ENCODE measurements at regions of chr17 and their contacts with region 1.

Region 1: GRCh38 chr17:4789901-4790704 is 1.3 kb downstream of the GLTPD2 start:
- DNase-seq: peak; percentile 54 to 94 (median 77)
- ATAC-seq: peak; percentile 77
- H3K4me3 ChIP-seq: peak overlapping the region; percentile 56 to 60
- H3K4me3 Mint-ChIP-seq: peak overlapping the region; percentile 89
- H3K27ac ChIP-seq: peak overlapping the region; percentile 63 to 68
- H3K27ac Mint-ChIP-seq: peak overlapping the region; percentile 96
- H3K4me1 ChIP-seq: peaks cover 29% of the 10 kb centered on the region
- H3K4me1 Mint-ChIP-seq: peaks cover 27% of the 10 kb centered on the region
- H3K27me3 ChIP-seq: peaks cover 15 to 20% of the 10 kb centered on the region in 2 experiments
- H3K27me3 Mint-ChIP-seq: peaks cover 26% of the 10 kb centered on the region
- CTCF ChIP-seq: peak; percentile 80

Region 2: GRCh38 chr17:4703330-4703691 is 86.8 kb before region 1 on chr17:
- CTCF ChIA-PET with region 1: interaction called, 45 read pairs
- POLR2A ChIA-PET with region 1: interaction called, 30 read pairs
- intact Hi-C with region 1: no loop called
- DNase-seq: no peak
- ATAC-seq: peak; percentile 11
- H3K4me3 ChIP-seq: peak overlapping the region; percentile 83 to 96
- H3K4me3 Mint-ChIP-seq: peak overlapping the region; percentile 92
- H3K27ac ChIP-seq: peak overlapping the region; percentile 86 to 96
- H3K27ac Mint-ChIP-seq: peak overlapping the region; percentile 91
- H3K4me1 ChIP-seq: peaks cover 26% of the 10 kb centered on the region
- H3K4me1 Mint-ChIP-seq: peaks cover 39% of the 10 kb centered on the region
- H3K27me3 ChIP-seq: no peaks in the 10 kb centered on the region
- H3K27me3 Mint-ChIP-seq: no peaks in the 10 kb centered on the region
- CTCF ChIP-seq: no peak

Region 3: DNA sequence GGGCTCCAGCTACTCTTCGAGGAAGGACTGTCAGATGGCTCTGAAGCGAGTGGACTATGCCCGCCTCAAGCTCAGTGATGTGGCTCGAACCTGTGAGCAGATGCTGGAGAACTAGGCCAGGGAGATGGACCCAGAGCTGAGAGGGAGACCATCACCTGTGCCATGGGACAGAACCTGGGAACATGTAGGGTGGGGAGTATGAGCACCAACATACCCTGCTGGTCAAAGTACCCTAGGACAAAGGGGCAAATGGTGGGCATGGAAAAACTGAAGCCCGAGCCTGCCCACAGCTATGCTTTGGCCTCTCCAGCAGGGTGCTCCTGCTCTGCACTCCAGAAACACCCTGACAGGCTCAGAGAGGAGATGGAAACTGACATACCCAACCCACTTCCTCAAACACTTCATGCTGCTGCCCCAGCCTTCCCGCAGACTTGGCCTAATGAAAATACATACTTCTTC is 57.0 kb before region 1 on chr17:
- CTCF ChIA-PET with region 1: interaction called, 10 read pairs
- POLR2A ChIA-PET with region 1: interaction called, 7 read pairs
- intact Hi-C with region 1: loop called (anchors 1 kb)
- DNase-seq: peak in 1 of 9 experiments; percentile 45
- ATAC-seq: no peak
- H3K4me3 ChIP-seq: no peak overlapping the region
- H3K4me3 Mint-ChIP-seq: peak overlapping the region; percentile 39
- H3K27ac ChIP-seq: no peak overlapping the region
- H3K27ac Mint-ChIP-seq: no peak overlapping the region
- H3K4me1 ChIP-seq: peaks cover 24% of the 10 kb centered on the region
- H3K4me1 Mint-ChIP-seq: peaks cover 30% of the 10 kb centered on the region
- H3K27me3 ChIP-seq: no peaks in the 10 kb centered on the region
- H3K27me3 Mint-ChIP-seq: no peaks in the 10 kb centered on the region
- CTCF ChIP-seq: no peak

Region 4: DNA sequence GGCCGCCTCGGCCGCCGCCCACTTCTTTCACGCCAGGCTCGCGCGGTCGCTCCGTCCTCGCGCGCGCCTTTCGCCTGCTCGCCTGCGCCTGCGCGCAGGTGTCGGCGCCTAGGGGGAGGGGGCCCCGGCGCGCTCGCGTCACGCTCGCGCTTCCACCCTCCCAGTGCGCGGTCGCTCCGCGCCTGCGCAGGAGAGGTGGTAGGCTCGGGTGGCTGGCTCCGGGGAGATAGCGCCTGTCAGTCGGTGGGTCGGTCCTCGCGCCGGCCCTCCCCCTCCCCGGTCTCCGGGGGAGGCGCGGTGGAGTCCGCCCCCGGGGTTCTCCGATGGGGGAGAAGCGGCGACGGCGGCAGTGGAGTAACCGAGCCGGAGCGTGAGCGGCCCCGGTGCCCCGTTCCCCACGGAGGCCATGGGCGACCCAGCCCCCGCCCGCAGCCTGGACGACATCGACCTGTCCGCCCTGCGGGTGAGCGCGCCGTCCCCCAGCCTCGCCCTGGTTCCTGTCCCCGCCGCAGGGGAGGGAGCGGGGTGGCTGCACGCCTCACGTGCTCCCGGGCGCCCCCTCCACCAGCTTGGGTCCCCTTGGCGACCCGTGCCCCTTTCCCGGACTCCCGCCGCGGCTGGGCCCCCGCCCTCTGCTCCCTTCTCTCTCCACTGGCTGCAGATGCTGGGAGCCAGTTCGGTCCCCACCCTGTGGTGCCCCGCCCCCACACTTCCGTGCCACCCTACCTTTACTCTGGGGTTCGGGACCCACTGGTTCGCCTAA is 43.3 kb after region 1 on chr17 and contains the start of gene MINK1:
- CTCF ChIA-PET with region 1: interaction called, 3 read pairs
- POLR2A ChIA-PET with region 1: interaction called, 3 read pairs
- intact Hi-C with region 1: loop called (anchors 1 kb)
- DNase-seq: peak; percentile 75 to 98 (median 88)
- ATAC-seq: peak; percentile 93
- H3K4me3 ChIP-seq: peak within 1 kb of the TSS; percentile 75 to 77
- H3K4me3 Mint-ChIP-seq: peak within 1 kb of the TSS; percentile 91
- H3K27ac ChIP-seq: peak within 1 kb of the TSS; percentile 73 to 80
- H3K27ac Mint-ChIP-seq: peak within 1 kb of the TSS; percentile 90
- H3K4me1 ChIP-seq: peaks cover 26% of the 10 kb centered on the region
- H3K4me1 Mint-ChIP-seq: peaks cover 39% of the 10 kb centered on the region
- H3K27me3 ChIP-seq: no peaks in the 10 kb centered on the region
- H3K27me3 Mint-ChIP-seq: peaks cover 6% of the 10 kb centered on the region
- CTCF ChIP-seq: no peak
- total RNA-seq, gene MINK1: 85.9 to 86.0 TPM

Region 5: GRCh38 chr17:4903051-4903818 is 113.1 kb after region 1 on chr17 and contains the start of gene CHRNE:
- CTCF ChIA-PET with region 1: interaction called, 4 read pairs
- POLR2A ChIA-PET with region 1: interaction called, 5 read pairs
- intact Hi-C with region 1: loop called in 1 of 2 experiments (anchors 1 kb)
- DNase-seq: peak; percentile 52 to 92 (median 79)
- ATAC-seq: peak; percentile 25
- H3K4me3 ChIP-seq: peak within 1 kb of the TSS; percentile 14 to 27
- H3K4me3 Mint-ChIP-seq: peak within 1 kb of the TSS; percentile 48
- H3K27ac ChIP-seq: peak within 1 kb of the TSS in 1 of 2 experiments; percentile 50
- H3K27ac Mint-ChIP-seq: peak within 1 kb of the TSS; percentile 76
- H3K4me1 ChIP-seq: peaks cover 51% of the 10 kb centered on the region
- H3K4me1 Mint-ChIP-seq: peaks cover 38% of the 10 kb centered on the region
- H3K27me3 ChIP-seq: no peaks in the 10 kb centered on the region
- H3K27me3 Mint-ChIP-seq: no peaks in the 10 kb centered on the region
- CTCF ChIP-seq: peak; percentile 94
- total RNA-seq, gene CHRNE: 5.5 to 6.1 TPM

Measured in CD8-positive, alpha-beta T cell (primary cell).